ENCODE measurements at regions of chr10 and their contacts with region 1.

Region 1: GRCh38 chr10:62038609-62039190 is 137.2 kb downstream of the ARID5B start:
- DNase-seq: peak; percentile 78
- ATAC-seq: peak; percentile 74
- H3K4me3 ChIP-seq: peak overlapping the region in 2 of 3 experiments; percentile 38 to 42; a peak in 3 of 6 replicates
- H3K27ac ChIP-seq: peak overlapping the region; percentile 92
- H3K4me1 ChIP-seq: peaks cover 79% of the 10 kb centered on the region
- H3K27me3 ChIP-seq: no peaks in the 10 kb centered on the region
- CTCF ChIP-seq: peak; percentile 84
- EP300 ChIP-seq: no peak; a peak in 1 of 4 replicates
- POLR2A ChIP-seq: no peak
- RAD21 ChIP-seq: peak; percentile 75

Region 2: GRCh38 chr10:61669161-61669725 is 369.5 kb before region 1 on chr10:
- CTCF ChIA-PET with region 1: no interaction called
- POLR2A ChIA-PET with region 1: no interaction called
- in situ Hi-C with region 1: no loop called
- intact Hi-C with region 1: no loop called
- DNase-seq: no peak
- ATAC-seq: no peak
- H3K4me3 ChIP-seq: no peak overlapping the region
- H3K27ac ChIP-seq: no peak overlapping the region
- H3K4me1 ChIP-seq: no peaks in the 10 kb centered on the region
- H3K27me3 ChIP-seq: no peaks in the 10 kb centered on the region; a peak in 1 of 5 replicates
- CTCF ChIP-seq: no peak
- EP300 ChIP-seq: no peak
- POLR2A ChIP-seq: no peak
- RAD21 ChIP-seq: no peak

Region 3: GRCh38 chr10:61750929-61751471 is 287.7 kb before region 1 on chr10:
- CTCF ChIA-PET with region 1: no interaction called
- POLR2A ChIA-PET with region 1: no interaction called
- in situ Hi-C with region 1: no loop called
- intact Hi-C with region 1: loop called (anchors 10 kb)
- DNase-seq: peak; percentile 74
- ATAC-seq: peak; percentile 99
- H3K4me3 ChIP-seq: peak overlapping the region in 1 of 3 experiments; percentile 34; a peak in 1 of 6 replicates
- H3K27ac ChIP-seq: no peak overlapping the region
- H3K4me1 ChIP-seq: peaks cover 48% of the 10 kb centered on the region
- H3K27me3 ChIP-seq: no peaks in the 10 kb centered on the region
- CTCF ChIP-seq: peak; percentile 89
- EP300 ChIP-seq: no peak
- POLR2A ChIP-seq: no peak
- RAD21 ChIP-seq: peak; percentile 56; the same call in 1 of the 2 replicates

Region 4: GRCh38 chr10:61896854-61897661 is 141.6 kb before region 1 on chr10:
- CTCF ChIA-PET with region 1: no interaction called
- POLR2A ChIA-PET with region 1: interaction called, 6 read pairs
- in situ Hi-C with region 1: no loop called
- intact Hi-C with region 1: loop called (anchors 1 kb)
- DNase-seq: peak; percentile 74
- ATAC-seq: peak; percentile 92
- H3K4me3 ChIP-seq: no peak overlapping the region
- H3K27ac ChIP-seq: no peak overlapping the region
- H3K4me1 ChIP-seq: peaks cover 52% of the 10 kb centered on the region
- H3K27me3 ChIP-seq: no peaks in the 10 kb centered on the region; a peak in 1 of 5 replicates
- CTCF ChIP-seq: peak; percentile 80
- EP300 ChIP-seq: no peak
- POLR2A ChIP-seq: no peak
- RAD21 ChIP-seq: peak; percentile 59; the same call in 1 of the 2 replicates

Region 5: GRCh38 chr10:61961278-61961677 is 77.4 kb before region 1 on chr10:
- CTCF ChIA-PET with region 1: no interaction called
- POLR2A ChIA-PET with region 1: interaction called, 16 read pairs
- in situ Hi-C with region 1: no loop called
- intact Hi-C with region 1: loop called (anchors 2 kb)
- DNase-seq: no peak
- ATAC-seq: no peak
- H3K4me3 ChIP-seq: no peak overlapping the region
- H3K27ac ChIP-seq: no peak overlapping the region
- H3K4me1 ChIP-seq: peaks cover 50% of the 10 kb centered on the region
- H3K27me3 ChIP-seq: no peaks in the 10 kb centered on the region
- CTCF ChIP-seq: no peak
- EP300 ChIP-seq: no peak
- POLR2A ChIP-seq: no peak
- RAD21 ChIP-seq: no peak

Region 6: DNA sequence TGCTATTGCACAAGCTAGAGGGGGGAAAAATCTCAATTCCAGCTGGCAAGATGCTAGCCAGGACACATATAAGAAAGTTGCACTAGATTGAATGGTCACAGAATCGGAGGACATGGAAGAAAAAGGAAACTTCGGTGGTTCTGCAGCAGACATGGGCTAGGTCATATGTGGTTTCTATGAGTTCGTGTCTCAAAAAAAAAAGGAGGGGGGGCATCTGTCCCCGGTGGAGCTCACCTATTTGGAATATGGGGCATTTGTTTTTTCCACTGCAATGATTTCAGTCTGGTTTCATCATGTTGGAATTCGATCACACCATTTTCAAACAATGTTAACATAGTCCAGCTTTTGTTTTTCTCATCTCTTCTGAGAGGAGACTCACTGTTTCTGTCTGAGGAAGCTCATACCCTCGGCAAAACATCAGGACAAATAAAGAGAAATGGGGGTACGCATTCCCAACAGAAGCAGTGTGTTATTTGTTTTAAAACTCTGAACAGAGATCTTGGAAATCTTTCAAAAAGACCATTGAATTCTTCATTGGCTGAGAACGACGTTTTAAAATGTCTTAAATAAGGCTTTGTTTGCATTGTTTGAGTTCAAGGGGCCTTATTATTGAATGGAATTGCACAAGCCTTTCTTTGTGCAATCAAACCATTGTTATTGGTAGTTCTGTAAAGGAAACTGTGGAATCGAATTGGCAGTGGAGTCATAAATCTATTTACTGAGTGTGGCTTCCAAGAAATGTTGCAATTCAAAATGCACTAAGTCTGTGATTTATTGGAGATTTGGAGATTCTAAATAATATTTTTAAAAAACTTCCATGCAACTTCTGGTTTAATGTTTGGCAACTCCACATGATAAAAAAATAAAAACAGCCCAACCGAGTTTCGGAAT is 56.7 kb after region 1 on chr10:
- CTCF ChIA-PET with region 1: no interaction called
- POLR2A ChIA-PET with region 1: interaction called, 63 read pairs
- in situ Hi-C with region 1: no loop called
- intact Hi-C with region 1: loop called (anchors 1 kb)
- DNase-seq: peak; percentile 94
- ATAC-seq: peak; percentile 36
- H3K4me3 ChIP-seq: peak overlapping the region in 1 of 3 experiments; percentile 21; a peak in 1 of 6 replicates
- H3K27ac ChIP-seq: peak overlapping the region; percentile 95
- H3K4me1 ChIP-seq: peaks cover 83% of the 10 kb centered on the region
- H3K27me3 ChIP-seq: no peaks in the 10 kb centered on the region
- CTCF ChIP-seq: no peak
- EP300 ChIP-seq: peak; percentile 49 to 93; a peak in 3 of 4 replicates
- POLR2A ChIP-seq: no peak; a peak in 1 of 4 replicates
- RAD21 ChIP-seq: no peak

Region 7: DNA sequence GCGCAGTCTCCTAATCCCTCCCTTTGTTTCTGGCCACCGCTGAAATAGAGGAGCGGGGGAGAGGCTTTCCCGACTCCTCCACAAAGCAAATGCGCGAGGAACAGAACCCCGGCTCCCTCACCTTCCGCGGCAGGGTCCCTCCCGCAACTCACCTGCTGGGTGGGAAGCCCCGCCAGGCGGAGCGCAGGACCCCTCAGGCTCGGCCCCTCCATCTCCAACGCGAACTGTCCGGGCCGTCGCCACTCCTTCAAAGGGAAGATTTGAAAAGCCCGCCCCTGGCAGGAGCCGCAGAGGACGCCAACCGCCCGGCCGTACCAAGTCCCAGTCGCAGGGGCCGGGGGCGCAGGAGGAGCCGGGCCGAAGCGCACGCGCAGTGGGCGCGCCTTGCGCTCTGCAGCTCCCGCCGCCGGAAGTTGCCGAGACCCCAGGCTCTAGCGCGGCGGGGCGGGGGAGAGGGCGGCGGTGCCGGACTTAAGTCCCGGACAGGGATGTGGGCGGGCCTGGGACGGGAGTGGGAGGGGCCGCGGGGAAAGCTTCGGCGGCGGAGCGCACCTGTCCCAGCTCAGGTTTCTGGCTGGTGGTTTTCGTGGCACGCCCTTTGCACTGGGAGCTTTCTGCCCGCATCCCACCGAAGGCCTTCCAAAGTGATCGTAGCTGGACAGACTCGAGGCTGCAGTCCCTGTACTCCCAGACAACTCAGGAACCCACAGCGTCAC is 229.9 kb after region 1 on chr10 and contains the start of gene RTKN2:
- CTCF ChIA-PET with region 1: no interaction called
- POLR2A ChIA-PET with region 1: interaction called, 5 read pairs
- in situ Hi-C with region 1: no loop called
- intact Hi-C with region 1: loop called (anchors 2 kb)
- DNase-seq: peak; percentile 90
- ATAC-seq: peak; percentile 95
- H3K4me3 ChIP-seq: peak within 1 kb of the TSS; percentile 88 to 93 (median 90)
- H3K27ac ChIP-seq: peak within 1 kb of the TSS; percentile 67
- H3K4me1 ChIP-seq: peaks cover 48% of the 10 kb centered on the region
- H3K27me3 ChIP-seq: no peaks in the 10 kb centered on the region
- CTCF ChIP-seq: 0 out of 2 replicates have a peak, but pooled peaks have one; percentile 13
- EP300 ChIP-seq: no peak
- POLR2A ChIP-seq: peak; percentile 57 to 66
- RAD21 ChIP-seq: no peak; the same call in 1 of the 2 replicates
- total RNA-seq, gene RTKN2: 7.0 and 10.8 TPM in 2 replicates